ENCODE measurements at regions of chr16 and their contacts with region 1.

Region 1: DNA sequence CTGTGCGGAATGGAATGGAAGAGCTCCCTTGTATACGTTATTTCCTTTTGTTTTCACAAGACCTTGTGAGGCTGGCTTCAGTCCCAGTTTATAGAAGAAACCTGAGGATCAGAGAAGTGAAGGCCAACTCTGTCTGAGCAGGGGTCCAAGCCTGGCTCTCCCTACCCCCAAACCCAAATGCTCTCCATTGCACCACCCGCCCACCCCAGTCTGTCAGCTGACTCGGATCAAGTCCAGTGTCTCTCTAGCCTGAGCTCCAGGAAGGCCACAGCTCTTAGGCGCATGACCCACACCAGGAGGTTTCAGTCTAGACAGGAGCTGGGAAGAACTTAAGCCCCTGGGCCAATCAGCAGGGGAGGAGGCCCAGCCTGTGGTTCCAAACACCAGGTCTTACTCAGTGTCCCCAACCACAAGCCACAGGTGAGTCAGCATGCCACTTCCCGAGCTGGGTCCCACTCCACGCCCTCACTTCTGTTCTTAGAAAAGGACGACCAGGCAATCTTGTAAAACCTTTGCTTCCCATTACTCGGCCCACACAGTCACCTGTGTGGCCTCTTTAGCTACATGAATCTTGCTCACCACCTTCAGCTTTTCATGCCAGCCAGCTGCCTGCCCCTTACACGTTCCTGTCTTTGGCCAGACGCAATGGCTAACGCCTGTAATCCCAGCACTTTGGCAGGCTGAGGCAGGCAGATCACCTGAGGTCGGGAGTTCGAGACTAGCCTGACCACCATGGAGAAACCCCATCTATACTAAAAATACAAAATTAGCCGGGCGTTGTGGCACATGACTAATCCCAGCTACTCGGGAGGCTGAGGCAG is 27.8 kb downstream of the TK2 start:
- H3K4me3 Mint-ChIP-seq: peak overlapping the region; percentile 13
- H3K27ac Mint-ChIP-seq: peak overlapping the region; percentile 100
- H3K4me1 Mint-ChIP-seq: peaks cover 100% of the 10 kb centered on the region
- H3K27me3 Mint-ChIP-seq: no peaks in the 10 kb centered on the region

Region 2: DNA sequence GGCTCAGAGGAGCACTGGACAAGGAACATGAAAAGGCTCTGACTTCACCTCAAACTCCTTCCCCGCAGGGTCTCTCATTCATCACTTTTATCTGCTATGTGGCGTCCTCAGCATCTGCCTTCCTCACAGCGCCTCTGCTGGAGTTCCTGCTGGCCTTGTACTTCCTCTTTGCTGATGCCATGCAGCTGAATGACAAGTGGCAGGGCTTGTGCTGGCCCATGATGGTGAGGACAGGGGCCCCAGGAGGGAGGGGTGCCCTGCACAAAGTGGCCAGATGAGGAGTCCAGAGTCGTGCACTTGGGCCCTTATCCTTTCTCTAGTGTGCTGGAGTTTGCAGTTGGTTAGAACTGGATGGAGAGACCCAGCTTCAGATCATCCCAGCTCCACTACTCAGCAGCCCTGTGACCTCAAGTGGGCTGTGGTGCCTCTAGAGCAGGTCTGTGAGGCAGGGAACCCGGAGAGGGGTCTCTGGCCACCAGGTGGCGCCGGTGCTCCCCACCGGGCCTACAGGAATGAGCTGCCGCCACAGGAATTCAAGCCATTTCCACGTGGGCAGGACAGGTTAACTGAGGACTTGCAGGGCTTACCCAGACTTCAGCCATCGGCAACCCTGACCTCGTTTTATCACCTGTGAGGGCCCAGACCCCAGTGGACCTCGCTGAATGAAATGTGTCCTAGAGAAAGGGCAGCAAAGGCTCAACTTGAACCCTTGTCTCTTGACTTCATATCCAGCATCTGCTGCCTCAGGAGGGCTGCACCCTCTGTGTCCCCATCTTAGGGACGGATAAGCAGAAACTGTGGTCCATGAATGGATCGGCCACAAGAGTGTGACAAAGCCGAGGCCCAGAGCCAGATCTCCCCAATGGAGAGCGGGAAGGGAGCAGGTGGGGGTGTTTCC is 86.3 kb after region 1 on chr16:
- intact Hi-C with region 1: loop called (anchors 5 kb)
- H3K4me3 Mint-ChIP-seq: no peak overlapping the region
- H3K27ac Mint-ChIP-seq: peak overlapping the region; percentile 66
- H3K4me1 Mint-ChIP-seq: peaks cover 40% of the 10 kb centered on the region
- H3K27me3 Mint-ChIP-seq: peaks cover 8% of the 10 kb centered on the region

Measured in dendritic cell treated with granulocyte-macrophage colony-stimulating factor and Interleukin-4, amounts not matched to agents 40 ng/mL and 50 ng/mL, for 4 days (primary cell).